ENCODE measurements at regions of chr11 and their contacts with region 1.

Region 1: GRCh38 chr11:9534791-9535781 is 38.4 kb upstream of the WEE1 start:
- DNase-seq: peak; percentile 80
- H3K4me3 Mint-ChIP-seq: no peak overlapping the region
- H3K27ac Mint-ChIP-seq: no peak overlapping the region
- H3K4me1 Mint-ChIP-seq: no peaks in the 10 kb centered on the region
- H3K27me3 Mint-ChIP-seq: no peaks in the 10 kb centered on the region

Region 2: DNA sequence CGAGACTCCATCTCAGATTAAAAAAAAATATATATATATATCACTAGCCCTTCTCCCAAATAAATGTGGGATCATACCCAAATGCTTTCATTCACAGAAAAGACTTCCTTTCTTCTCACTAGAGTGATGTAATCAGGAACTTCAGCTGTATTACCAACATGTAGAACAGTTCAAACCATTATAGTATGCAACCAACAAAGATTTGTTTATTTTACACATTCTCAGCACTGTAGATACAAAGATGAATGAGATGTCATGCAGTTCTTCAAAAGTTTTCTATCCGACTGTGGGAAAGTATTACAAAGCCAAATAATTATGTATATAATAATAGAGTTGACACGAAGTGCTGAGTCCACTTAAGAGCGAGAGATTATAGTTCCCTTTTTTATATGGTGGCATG is 96.5 kb before region 1 on chr11:
- CTCF ChIA-PET with region 1: no interaction called
- POLR2A ChIA-PET with region 1: no interaction called
- DNase-seq: no peak
- H3K4me3 Mint-ChIP-seq: no peak overlapping the region
- H3K27ac Mint-ChIP-seq: no peak overlapping the region
- H3K4me1 Mint-ChIP-seq: peaks cover 2% of the 10 kb centered on the region
- H3K27me3 Mint-ChIP-seq: no peaks in the 10 kb centered on the region

Region 3: GRCh38 chr11:9498457-9499078 is 36.5 kb before region 1 on chr11:
- CTCF ChIA-PET with region 1: interaction called, 10 read pairs
- POLR2A ChIA-PET with region 1: no interaction called
- DNase-seq: no peak
- H3K4me3 Mint-ChIP-seq: no peak overlapping the region
- H3K27ac Mint-ChIP-seq: no peak overlapping the region
- H3K4me1 Mint-ChIP-seq: no peaks in the 10 kb centered on the region
- H3K27me3 Mint-ChIP-seq: no peaks in the 10 kb centered on the region

Region 4: GRCh38 chr11:9516113-9516512 is 19.0 kb before region 1 on chr11:
- CTCF ChIA-PET with region 1: interaction called, 11 read pairs
- POLR2A ChIA-PET with region 1: no interaction called
- DNase-seq: no peak
- H3K4me3 Mint-ChIP-seq: no peak overlapping the region
- H3K27ac Mint-ChIP-seq: no peak overlapping the region
- H3K4me1 Mint-ChIP-seq: peaks cover 3% of the 10 kb centered on the region
- H3K27me3 Mint-ChIP-seq: no peaks in the 10 kb centered on the region

Region 5: GRCh38 chr11:9565822-9566560 is 30.9 kb after region 1 on chr11:
- CTCF ChIA-PET with region 1: interaction called, 18 read pairs
- POLR2A ChIA-PET with region 1: no interaction called
- DNase-seq: peak; percentile 73
- H3K4me3 Mint-ChIP-seq: peak overlapping the region; percentile 52
- H3K27ac Mint-ChIP-seq: peak overlapping the region; percentile 83
- H3K4me1 Mint-ChIP-seq: peaks cover 42% of the 10 kb centered on the region
- H3K27me3 Mint-ChIP-seq: peaks cover 2% of the 10 kb centered on the region

Region 6: DNA sequence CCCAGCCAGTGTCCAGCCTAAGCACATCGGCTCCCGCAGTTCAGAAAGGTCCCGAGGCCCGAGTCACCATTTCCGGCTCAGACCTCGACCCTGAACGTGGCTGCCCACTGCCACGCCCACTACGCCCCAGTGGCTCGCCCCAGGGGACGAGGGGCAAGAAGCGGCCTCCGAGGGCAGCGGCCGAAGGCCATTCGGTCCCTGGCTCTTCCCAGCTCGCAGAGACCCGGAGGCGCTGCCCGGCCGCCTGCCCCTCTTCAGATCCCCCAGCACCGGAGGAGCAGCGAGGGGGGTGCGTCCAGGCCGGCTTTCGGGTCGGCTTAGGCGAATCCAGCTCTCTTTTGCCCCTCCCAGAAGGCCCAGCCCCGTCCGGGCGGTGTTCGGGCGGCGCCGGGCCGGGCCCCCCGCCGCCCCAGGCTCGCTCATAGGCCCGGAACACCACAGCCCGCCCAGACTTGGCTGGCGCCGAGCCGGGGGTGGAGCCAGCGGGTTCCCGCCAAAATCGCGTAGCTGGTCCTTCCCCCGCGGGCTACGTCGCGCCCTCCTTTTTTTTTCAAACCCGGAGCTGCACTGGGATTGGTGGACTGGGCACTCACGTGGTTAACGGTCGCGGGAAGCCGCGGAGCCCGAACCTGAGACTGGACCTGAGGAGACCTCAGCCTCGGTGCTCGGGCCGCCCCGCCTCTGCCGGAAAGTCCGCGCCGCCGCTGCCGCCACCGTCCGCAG is 38.1 kb after region 1 on chr11 and contains the start of gene WEE1:
- CTCF ChIA-PET with region 1: interaction called, 35 read pairs
- POLR2A ChIA-PET with region 1: interaction called, 9 read pairs
- DNase-seq: peak; percentile 98
- H3K4me3 Mint-ChIP-seq: peak within 1 kb of the TSS; percentile 98
- H3K27ac Mint-ChIP-seq: peak within 1 kb of the TSS; percentile 83
- H3K4me1 Mint-ChIP-seq: peaks cover 37% of the 10 kb centered on the region
- H3K27me3 Mint-ChIP-seq: peaks cover 2% of the 10 kb centered on the region
- total RNA-seq, gene WEE1: 62.8 to 64.1 TPM

Region 7: DNA sequence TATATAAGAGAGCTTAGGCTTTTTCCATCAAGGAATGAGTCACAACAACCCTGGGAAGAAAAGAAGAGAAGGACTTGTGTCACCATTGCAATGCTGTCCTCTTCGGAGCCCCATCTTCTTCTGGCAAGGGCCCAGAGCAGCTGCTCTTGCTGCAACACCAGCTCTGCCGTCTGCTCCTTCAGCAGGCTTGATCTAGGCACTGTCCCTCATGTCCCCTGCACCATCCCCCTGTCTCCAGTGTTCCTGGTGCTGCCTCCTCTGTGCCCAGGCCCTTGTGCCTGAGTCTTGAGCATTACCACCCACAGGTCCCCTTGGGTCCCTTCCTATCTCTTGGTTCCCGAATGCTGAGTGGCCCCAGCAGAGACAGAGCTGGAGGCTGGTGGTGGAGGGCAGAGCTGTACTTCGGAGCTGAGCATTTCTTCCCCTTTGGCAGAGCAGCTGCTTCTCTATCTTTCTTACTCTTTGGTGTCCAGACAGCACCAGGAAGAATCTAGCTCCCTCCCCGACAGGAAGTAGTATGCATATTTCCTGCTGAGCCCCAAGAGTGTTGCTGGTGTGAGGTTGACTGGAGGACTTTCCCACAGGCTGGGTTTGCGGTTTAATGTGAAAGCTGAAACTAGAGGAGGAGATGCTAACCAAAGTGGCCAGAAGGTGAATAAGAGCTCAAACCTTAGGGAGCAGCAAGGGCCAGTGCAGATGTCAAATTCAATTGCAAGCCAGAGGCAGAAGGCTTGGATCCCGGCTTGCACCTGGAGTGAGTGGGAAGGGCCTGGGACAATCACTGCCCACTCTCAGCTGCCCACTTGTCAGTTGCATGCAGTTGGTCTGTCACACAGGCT is 66.2 kb after region 1 on chr11:
- CTCF ChIA-PET with region 1: interaction called, 16 read pairs
- POLR2A ChIA-PET with region 1: interaction called, 5 read pairs
- DNase-seq: peak; percentile 83
- H3K4me3 Mint-ChIP-seq: peak overlapping the region; percentile 49
- H3K27ac Mint-ChIP-seq: peak overlapping the region; percentile 59
- H3K4me1 Mint-ChIP-seq: peaks cover 25% of the 10 kb centered on the region
- H3K27me3 Mint-ChIP-seq: peaks cover 19% of the 10 kb centered on the region

Region 8: DNA sequence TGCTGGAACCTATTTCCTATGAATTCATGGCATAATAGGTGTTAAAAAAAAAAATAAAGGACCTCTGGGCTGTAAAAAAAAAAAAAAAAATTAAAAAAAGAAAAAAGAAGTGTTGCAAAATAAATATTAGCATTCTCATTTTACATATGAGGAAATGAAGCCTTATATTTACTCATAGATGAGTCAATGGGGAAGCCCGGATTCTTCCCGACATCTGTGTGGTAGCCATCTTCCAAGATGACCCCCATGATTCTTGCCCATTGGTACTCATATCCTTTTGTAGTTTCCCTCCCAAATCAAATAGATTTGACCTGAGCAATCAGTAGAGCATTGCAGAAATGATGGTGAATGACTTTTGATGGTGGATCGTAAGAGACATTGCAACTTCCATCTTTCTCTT is 125.8 kb after region 1 on chr11:
- CTCF ChIA-PET with region 1: no interaction called
- POLR2A ChIA-PET with region 1: no interaction called
- DNase-seq: no peak
- H3K4me3 Mint-ChIP-seq: no peak overlapping the region
- H3K27ac Mint-ChIP-seq: no peak overlapping the region
- H3K4me1 Mint-ChIP-seq: peaks cover 21% of the 10 kb centered on the region
- H3K27me3 Mint-ChIP-seq: peaks cover 24% of the 10 kb centered on the region

Region 9: GRCh38 chr11:9748361-9748970 is 213.4 kb after region 1 on chr11:
- CTCF ChIA-PET with region 1: interaction called, 76 read pairs
- POLR2A ChIA-PET with region 1: interaction called, 7 read pairs
- DNase-seq: peak; percentile 77
- H3K4me3 Mint-ChIP-seq: no peak overlapping the region
- H3K27ac Mint-ChIP-seq: no peak overlapping the region
- H3K4me1 Mint-ChIP-seq: peaks cover 22% of the 10 kb centered on the region
- H3K27me3 Mint-ChIP-seq: no peaks in the 10 kb centered on the region

Measured in activated CD4-positive, alpha-beta memory T cell treated with anti-CD3 and anti-CD28 coated beads, Interleukin-2, amount 10 ng/mL, durations not matched to agents 7 days and 5 days (primary cell).